Colonic mucosa (tissue), 4 donors: ENCODE measurements at regions of chr4 and their contacts with region 1.

Region 1: GRCh38 chr4:15799701-15800100 is 21.6 kb downstream of the CD38 start:
- DNase-seq: no peak
- H3K4me3 ChIP-seq: no peak overlapping the region
- H3K27ac ChIP-seq: no peak overlapping the region
- H3K4me1 ChIP-seq: no peaks in the 10 kb centered on the region
- H3K27me3 ChIP-seq: no peaks in the 10 kb centered on the region
- CTCF ChIP-seq: no peak

Region 2: GRCh38 chr4:15738877-15739276 is 60.8 kb before region 1 on chr4:
- intact Hi-C with region 1: loop called (anchors 5 kb)
- DNase-seq: no peak
- H3K4me3 ChIP-seq: no peak overlapping the region
- H3K27ac ChIP-seq: no peak overlapping the region
- H3K4me1 ChIP-seq: no peaks in the 10 kb centered on the region
- H3K27me3 ChIP-seq: no peaks in the 10 kb centered on the region
- CTCF ChIP-seq: no peak

Region 3: DNA sequence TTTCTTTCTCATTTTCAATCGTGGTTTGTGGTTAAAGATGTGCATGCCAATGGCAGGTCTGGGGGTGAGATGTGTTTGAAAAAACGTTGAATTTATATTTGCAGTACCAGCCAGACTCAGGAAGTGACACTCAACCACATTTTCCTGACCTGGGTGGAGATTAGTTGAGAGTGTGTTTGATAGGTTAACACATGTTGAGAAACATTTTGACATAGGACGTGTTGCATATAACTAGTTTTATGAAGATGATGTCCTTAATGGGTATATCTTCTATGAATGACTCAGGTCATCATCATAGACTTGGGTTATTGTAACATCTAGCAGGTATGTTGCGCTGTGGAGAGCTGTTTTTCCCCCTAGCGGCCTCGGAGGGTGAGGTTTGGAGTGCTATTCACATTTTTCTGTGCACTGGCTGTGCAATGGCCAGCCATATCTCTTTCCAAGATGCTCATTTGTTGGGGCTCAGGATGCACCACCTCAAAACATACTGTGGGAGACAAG is 43.3 kb before region 1 on chr4:
- intact Hi-C with region 1: no loop called
- DNase-seq: peak; percentile 24
- H3K4me3 ChIP-seq: no peak overlapping the region
- H3K27ac ChIP-seq: no peak overlapping the region
- H3K4me1 ChIP-seq: no peaks in the 10 kb centered on the region
- H3K27me3 ChIP-seq: no peaks in the 10 kb centered on the region
- CTCF ChIP-seq: no peak

Region 4: GRCh38 chr4:15893962-15894361 is 94.3 kb after region 1 on chr4:
- intact Hi-C with region 1: no loop called
- DNase-seq: no peak
- H3K4me3 ChIP-seq: no peak overlapping the region
- H3K27ac ChIP-seq: no peak overlapping the region
- H3K4me1 ChIP-seq: no peaks in the 10 kb centered on the region
- H3K27me3 ChIP-seq: no peaks in the 10 kb centered on the region
- CTCF ChIP-seq: no peak